Gastrocnemius medialis (tissue), 4 donors: ENCODE measurements at regions of chr17 and their contacts with region 1.

Region 1: GRCh38 chr17:27569257-27569722 is 61.7 kb upstream of the LGALS9 start:
- DNase-seq: peak in 1 of 2 donors; percentile 76
- ATAC-seq: peak; percentile 17 to 25
- H3K4me3 ChIP-seq: no peak overlapping the region
- H3K27ac ChIP-seq: peak overlapping the region; percentile 95 to 99 (median 97)
- H3K4me1 ChIP-seq: peaks cover 69 to 76% of the 10 kb centered on the region in 2 donors
- H3K27me3 ChIP-seq: no peaks in the 10 kb centered on the region
- CTCF ChIP-seq: peak; percentile 40 to 87 (median 76)
- POLR2A ChIP-seq: no peak

Region 2: GRCh38 chr17:27332485-27333409 is 236.5 kb before region 1 on chr17:
- in situ Hi-C with region 1: no loop called
- intact Hi-C with region 1: loop called (anchors 1 kb)
- DNase-seq: peak; percentile 97 to 99
- ATAC-seq: peak; percentile 89 to 91
- H3K4me3 ChIP-seq: peak overlapping the region; percentile 48 to 57 (median 52)
- H3K27ac ChIP-seq: peak overlapping the region; percentile 89 to 95 (median 94)
- H3K4me1 ChIP-seq: peaks cover 16 to 17% of the 10 kb centered on the region in 2 donors
- H3K27me3 ChIP-seq: no peaks in the 10 kb centered on the region
- CTCF ChIP-seq: peak; percentile 93 to 97 (median 94)
- POLR2A ChIP-seq: peak; percentile 36 to 56

Region 3: GRCh38 chr17:27455914-27456680 is 113.2 kb before region 1 on chr17 and contains the start of gene KSR1:
- in situ Hi-C with region 1: no loop called
- intact Hi-C with region 1: loop called (anchors 10 kb)
- DNase-seq: peak; percentile 44 to 67
- ATAC-seq: peak; percentile 86 to 91
- H3K4me3 ChIP-seq: peak within 1 kb of the TSS; percentile 73 to 92 (median 86)
- H3K27ac ChIP-seq: peak within 1 kb of the TSS; percentile 71 to 82 (median 78)
- H3K4me1 ChIP-seq: peaks cover 4 to 10% of the 10 kb centered on the region in 2 donors
- H3K27me3 ChIP-seq: no peaks in the 10 kb centered on the region
- CTCF ChIP-seq: peak in 3 of 5 experiments; percentile 34 to 44 (median 38)
- POLR2A ChIP-seq: peak; percentile 69 to 89
- total RNA-seq, gene KSR1: 10.4 to 17.7 (median 13.2) TPM

Region 4: DNA sequence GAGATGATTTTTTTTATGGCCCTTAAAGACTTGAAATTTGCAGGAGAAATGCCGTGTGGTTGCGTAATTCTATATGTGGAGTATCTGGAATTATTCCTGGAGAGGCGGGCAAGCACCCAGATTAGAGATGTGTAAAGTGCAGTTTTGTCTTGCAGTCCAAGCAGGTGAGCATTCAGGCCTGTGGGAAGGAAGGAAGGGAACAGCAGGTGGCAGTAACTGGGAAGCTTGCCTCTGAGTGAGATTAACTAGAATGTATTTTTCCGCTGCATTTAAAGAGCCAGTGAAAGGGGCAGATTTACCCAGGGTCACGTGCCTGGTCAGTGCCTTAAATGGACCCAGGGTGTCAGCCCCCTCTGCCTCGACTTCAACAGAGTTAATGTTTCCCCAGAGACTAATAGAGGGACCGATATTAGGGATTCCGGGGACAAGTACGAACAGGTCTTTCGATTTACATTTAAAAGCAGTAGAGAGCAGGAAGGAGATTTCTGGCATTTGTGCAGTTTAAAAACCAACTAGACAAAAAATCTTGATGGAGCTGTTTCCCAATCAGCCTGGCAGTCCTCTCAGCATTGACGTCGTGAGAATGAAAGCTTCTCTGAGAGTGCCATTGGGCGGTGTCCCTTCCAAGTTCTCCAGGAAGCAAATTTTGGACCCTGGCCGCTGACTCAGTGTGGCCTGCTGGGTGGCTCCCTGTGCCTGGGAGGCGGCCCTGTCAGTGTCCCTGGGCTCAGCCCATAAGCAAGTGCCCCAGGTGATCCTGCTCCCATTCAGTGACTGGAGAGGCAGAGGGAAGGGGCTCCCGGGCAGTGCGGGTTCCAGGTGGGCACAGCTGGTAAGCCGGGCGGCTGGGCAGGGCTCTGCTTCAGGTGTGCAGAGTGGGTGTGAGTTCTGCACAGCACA is 74.8 kb before region 1 on chr17:
- in situ Hi-C with region 1: no loop called
- intact Hi-C with region 1: loop called (anchors 2 kb)
- DNase-seq: peak; percentile 34 to 73
- ATAC-seq: peak; percentile 73 to 84
- H3K4me3 ChIP-seq: peak overlapping the region; percentile 12 to 36 (median 18)
- H3K27ac ChIP-seq: peak overlapping the region; percentile 5 to 27 (median 13)
- H3K4me1 ChIP-seq: peaks cover 18% of the 10 kb centered on the region in 2 donors
- H3K27me3 ChIP-seq: no peaks in the 10 kb centered on the region
- CTCF ChIP-seq: peak; percentile 33 to 63 (median 44)
- POLR2A ChIP-seq: no peak